ENCODE measurements at regions of chr7 and their contacts with region 1.

Region 1: GRCh38 chr7:32347244-32347828 is 142.8 kb downstream of the LSM5 start:
- DNase-seq: no peak
- H3K4me3 ChIP-seq: no peak overlapping the region
- H3K27ac ChIP-seq: no peak overlapping the region
- H3K4me1 ChIP-seq: peaks cover 6% of the 10 kb centered on the region
- H3K27me3 ChIP-seq: no peaks in the 10 kb centered on the region
- CTCF ChIP-seq: peak; percentile 59 to 80

Region 2: DNA sequence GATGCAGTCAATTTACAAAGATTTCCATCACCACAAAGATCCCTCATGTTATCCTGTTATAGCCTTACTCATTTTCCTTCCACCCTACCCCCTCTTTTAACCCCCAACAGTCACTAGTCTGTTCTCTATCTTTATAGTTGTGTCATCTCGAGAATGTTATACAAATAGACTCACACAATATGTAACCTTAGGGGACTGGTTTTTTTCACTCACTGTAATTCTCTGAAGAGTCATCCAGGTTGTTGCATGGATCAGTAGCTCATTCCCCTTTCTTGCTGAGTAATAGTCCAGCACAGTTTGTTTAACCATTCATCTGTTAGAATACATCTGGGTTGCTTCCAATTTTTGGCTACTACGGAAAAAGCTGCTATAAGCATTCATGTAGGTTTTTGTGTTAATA is 156.0 kb before region 1 on chr7:
- CTCF ChIA-PET with region 1: interaction called, 10 read pairs
- dilution Hi-C with region 1: no loop called
- in situ Hi-C with region 1: no loop called
- intact Hi-C with region 1: no loop called
- DNase-seq: no peak
- H3K4me3 ChIP-seq: no peak overlapping the region
- H3K27ac ChIP-seq: no peak overlapping the region
- H3K4me1 ChIP-seq: no peaks in the 10 kb centered on the region
- H3K27me3 ChIP-seq: no peaks in the 10 kb centered on the region
- CTCF ChIP-seq: no peak

Region 3: DNA sequence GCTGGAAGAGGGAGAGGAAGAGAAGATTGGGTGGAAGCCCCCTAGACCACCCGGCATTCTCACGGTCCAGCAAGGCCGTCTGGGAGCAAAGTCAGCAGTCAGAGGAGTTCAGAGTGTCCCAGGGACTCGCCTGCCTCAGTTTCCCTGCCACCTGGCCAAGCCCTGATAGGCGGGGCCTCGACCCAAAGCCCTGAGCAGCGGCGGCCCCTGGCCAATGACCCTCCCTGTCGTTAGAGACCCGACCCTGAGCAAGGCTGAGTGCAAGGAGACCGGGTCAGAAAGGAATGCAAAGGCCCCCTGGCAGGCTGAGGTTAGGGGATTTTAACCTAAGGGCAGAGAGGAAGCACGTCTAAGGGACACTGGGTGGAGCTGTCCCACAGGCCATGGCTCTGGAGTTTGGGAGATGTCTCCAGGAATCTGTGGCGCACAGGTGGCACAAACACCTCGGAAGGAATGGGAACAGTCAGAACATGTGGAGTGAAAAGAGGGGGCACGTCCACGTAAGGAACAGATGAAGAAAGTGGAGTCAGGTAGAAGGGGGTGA is 80.3 kb before region 1 on chr7:
- CTCF ChIA-PET with region 1: no interaction called
- dilution Hi-C with region 1: no loop called
- in situ Hi-C with region 1: no loop called
- intact Hi-C with region 1: loop called (anchors 5 kb)
- DNase-seq: no peak
- H3K4me3 ChIP-seq: no peak overlapping the region
- H3K27ac ChIP-seq: no peak overlapping the region
- H3K4me1 ChIP-seq: no peaks in the 10 kb centered on the region
- H3K27me3 ChIP-seq: no peaks in the 10 kb centered on the region
- CTCF ChIP-seq: no peak

Region 4: GRCh38 chr7:32298408-32299132 is 48.8 kb before region 1 on chr7:
- CTCF ChIA-PET with region 1: no interaction called
- dilution Hi-C with region 1: no loop called
- in situ Hi-C with region 1: no loop called
- intact Hi-C with region 1: no loop called
- DNase-seq: peak; percentile 20
- H3K4me3 ChIP-seq: peak overlapping the region; percentile 47 to 62 (median 49)
- H3K27ac ChIP-seq: no peak overlapping the region
- H3K4me1 ChIP-seq: peaks cover 14% of the 10 kb centered on the region
- H3K27me3 ChIP-seq: peaks cover 2% of the 10 kb centered on the region
- CTCF ChIP-seq: peak in 1 of 2 donors; percentile 3

Region 5: DNA sequence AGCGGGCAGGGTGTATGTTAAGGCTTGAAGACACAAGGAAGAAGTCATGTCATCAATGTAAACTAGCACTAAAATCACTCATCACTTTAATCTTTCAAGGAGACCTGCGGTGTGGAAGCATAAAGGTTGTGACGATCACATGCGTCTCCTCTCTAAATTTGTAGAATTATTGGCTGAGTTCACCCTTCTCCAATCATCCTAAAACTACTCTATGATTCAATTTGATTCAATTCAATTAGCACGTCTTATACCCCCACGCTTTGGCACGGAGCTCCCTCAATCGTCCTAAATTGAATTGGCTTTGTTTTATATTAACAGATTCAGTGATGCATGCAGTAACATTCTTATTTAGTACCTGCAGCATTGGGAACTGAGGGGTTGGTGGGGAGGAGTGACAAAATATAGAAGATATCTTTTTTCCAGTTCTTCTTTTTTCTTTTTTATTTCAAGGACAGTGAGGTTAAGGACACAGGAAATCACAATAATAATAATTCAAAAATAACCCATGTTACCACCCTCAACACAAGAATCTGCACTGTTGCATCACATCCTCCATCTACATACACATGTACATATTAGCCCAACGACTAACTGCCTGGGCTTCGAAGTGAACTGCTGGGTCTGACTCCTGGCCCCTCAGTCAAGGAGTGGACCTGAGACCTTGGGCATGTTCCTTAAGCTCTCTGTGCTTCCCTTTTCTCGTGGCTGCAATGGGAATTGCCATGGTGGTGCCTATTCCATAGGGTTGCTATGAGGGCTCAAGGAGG is 56.3 kb after region 1 on chr7:
- CTCF ChIA-PET with region 1: no interaction called
- dilution Hi-C with region 1: loop called (anchors 10 kb)
- in situ Hi-C with region 1: no loop called
- intact Hi-C with region 1: no loop called
- DNase-seq: no peak
- H3K4me3 ChIP-seq: no peak overlapping the region
- H3K27ac ChIP-seq: no peak overlapping the region
- H3K4me1 ChIP-seq: no peaks in the 10 kb centered on the region
- H3K27me3 ChIP-seq: peaks cover 2% of the 10 kb centered on the region
- CTCF ChIP-seq: no peak

Measured in mammary epithelial cell (primary cell).